ENCODE measurements at regions of chr16 and their contacts with region 1.

Region 1: DNA sequence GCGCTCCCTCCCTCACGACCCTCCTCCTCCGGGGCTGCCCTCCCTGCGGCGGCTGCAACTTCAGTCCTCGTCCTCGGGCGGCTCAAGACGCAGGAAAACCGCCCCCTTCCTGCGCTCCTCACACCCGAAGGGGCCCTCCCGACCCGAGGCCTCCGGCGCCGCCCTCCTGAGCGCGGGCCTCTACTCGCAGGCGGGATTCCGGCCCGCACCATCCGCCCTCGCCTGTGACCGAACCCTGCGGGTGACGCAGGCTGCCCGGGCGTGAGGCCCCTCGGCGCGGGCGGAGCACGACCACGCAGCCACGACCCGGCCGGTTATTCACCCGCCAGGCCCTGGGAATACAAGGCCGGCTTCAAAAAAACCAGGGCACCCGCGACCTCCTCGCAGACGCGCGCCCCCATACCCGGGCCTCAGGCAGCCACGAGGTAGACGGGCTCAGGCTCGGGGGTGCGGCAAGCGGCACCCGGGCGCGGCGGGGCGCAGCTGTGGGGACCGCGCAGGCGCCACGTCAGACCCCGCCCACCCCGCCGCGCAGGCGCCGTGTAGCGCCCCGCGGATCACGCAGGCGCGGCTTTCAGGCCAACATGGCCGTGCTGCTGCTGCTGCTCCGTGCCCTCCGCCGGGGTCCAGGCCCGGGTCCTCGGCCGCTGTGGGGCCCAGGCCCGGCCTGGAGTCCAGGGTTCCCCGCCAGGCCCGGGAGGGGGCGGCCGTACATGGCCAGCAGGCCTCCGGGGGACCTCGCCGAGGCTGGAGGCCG is at the start of gene SPG7:
- DNase-seq: peak; percentile 75 to 89
- H3K4me3 ChIP-seq: peak within 1 kb of the TSS; percentile 61 to 94
- H3K27ac ChIP-seq: peak within 1 kb of the TSS; percentile 90 to 94
- H3K4me1 ChIP-seq: peaks cover 0 to 6% of the 10 kb centered on the region in 2 donors
- H3K27me3 ChIP-seq: no peaks in the 10 kb centered on the region
- CTCF ChIP-seq: peak in 2 of 4 experiments; percentile 6 to 15
- POLR2A ChIP-seq: peak; percentile 92 to 96
- total RNA-seq, gene SPG7: 66.6 to 208 (median 144) TPM

Region 2: DNA sequence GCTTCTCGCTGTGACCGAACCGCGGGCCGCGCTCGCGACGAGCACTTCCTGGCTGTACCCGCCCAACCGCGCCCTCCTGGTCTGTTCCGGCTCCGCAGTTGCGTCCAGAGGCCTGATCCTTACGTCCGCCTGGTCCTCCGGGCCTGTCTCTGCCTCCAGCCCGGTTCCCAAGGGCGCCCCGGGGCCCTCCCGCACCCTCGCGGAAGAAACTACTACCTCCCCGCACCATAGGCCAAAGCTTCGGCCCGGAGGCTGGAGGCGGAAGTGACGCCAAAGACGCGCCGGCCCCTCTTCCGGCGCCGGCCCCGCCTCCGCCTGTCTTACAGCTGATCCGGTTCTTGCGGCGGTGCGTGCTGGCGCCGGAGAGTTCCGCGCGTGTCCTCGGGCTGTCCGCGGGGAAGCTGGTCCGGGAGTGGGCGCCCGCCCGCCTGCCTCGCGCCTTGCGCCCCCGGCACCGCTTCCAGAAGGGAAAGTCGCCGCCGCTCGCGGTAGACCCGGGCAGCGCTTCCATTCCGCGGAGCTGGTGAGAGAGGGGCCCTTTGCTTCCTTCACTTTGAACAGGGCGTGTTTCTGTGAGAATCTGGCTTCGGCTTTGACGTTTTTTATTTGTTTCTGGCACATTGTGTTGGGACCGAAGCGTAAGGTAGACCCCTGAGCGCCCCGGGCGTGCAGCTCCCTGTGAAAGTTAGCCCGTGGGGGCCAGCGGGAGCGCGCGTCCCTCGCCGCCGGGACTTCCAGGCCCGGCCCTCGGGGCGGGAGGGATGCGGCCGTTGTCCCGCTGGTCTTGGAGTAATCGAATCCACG is 290.4 kb before region 1 on chr16 and contains the start of gene ZNF778:
- intact Hi-C with region 1: no loop called
- DNase-seq: peak; percentile 75 to 79
- H3K4me3 ChIP-seq: peak within 1 kb of the TSS; percentile 60 to 83
- H3K27ac ChIP-seq: peak within 1 kb of the TSS; percentile 92 to 94
- H3K4me1 ChIP-seq: peaks cover 3% of the 10 kb centered on the region in 2 donors
- H3K27me3 ChIP-seq: no peaks in the 10 kb centered on the region
- CTCF ChIP-seq: peak in 2 of 4 experiments; percentile 26 to 35
- POLR2A ChIP-seq: peak; percentile 74 to 78
- total RNA-seq, gene ZNF778: 7.4 to 30.2 (median 15.9) TPM

Region 3: GRCh38 chr16:89319883-89320781 is 187.9 kb before region 1 on chr16:
- intact Hi-C with region 1: loop called (anchors 10 kb)
- DNase-seq: peak in 1 of 2 donors; percentile 54
- H3K4me3 ChIP-seq: peak overlapping the region in 1 of 2 donors; percentile 6
- H3K27ac ChIP-seq: peak overlapping the region; percentile 13 to 15
- H3K4me1 ChIP-seq: peaks cover 6 to 23% of the 10 kb centered on the region in 2 donors
- H3K27me3 ChIP-seq: no peaks in the 10 kb centered on the region
- CTCF ChIP-seq: no peak
- POLR2A ChIP-seq: no peak

Region 4: DNA sequence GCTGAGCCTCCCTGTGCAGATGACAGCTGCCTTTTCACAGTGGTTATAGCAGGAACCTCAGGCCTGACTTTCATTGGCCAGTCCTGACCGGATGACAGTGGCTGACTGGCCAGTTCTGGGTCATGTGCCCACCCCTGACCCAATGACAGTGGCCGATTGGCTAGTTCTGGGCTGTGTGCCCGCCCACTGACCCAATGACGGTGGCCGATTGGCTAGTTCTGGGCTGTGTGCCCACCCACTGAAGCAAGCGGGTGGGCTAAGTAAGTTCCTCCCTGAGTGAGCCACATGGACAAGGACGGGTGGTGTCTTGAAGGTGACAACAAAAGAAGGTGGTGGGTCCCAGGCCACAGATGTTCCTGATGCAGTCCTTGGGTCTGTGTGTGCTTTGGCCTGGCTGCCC is 450.1 kb after region 1 on chr16:
- intact Hi-C with region 1: no loop called
- DNase-seq: no peak
- H3K4me3 ChIP-seq: no peak overlapping the region
- H3K27ac ChIP-seq: no peak overlapping the region
- H3K4me1 ChIP-seq: no peaks in the 10 kb centered on the region
- H3K27me3 ChIP-seq: no peaks in the 10 kb centered on the region
- CTCF ChIP-seq: no peak
- POLR2A ChIP-seq: no peak